Mammary epithelial cell (primary cell): ENCODE measurements at regions of chr11 and their contacts with region 1.

Region 1: GRCh38 chr11:18775492-18776292 is 15.9 kb downstream of the PTPN5 start:
- DNase-seq: peak; percentile 31
- H3K4me3 ChIP-seq: no peak overlapping the region
- H3K27ac ChIP-seq: no peak overlapping the region
- H3K4me1 ChIP-seq: no peaks in the 10 kb centered on the region
- H3K27me3 ChIP-seq: no peaks in the 10 kb centered on the region
- CTCF ChIP-seq: peak; percentile 89 to 95

Region 2: GRCh38 chr11:18802381-18803257 is 26.9 kb after region 1 on chr11:
- CTCF ChIA-PET with region 1: interaction called, 3 read pairs
- dilution Hi-C with region 1: no loop called
- in situ Hi-C with region 1: no loop called
- intact Hi-C with region 1: loop called (anchors 1 kb)
- DNase-seq: peak; percentile 40
- H3K4me3 ChIP-seq: no peak overlapping the region
- H3K27ac ChIP-seq: no peak overlapping the region
- H3K4me1 ChIP-seq: peaks cover 6% of the 10 kb centered on the region
- H3K27me3 ChIP-seq: peaks cover 4% of the 10 kb centered on the region
- CTCF ChIP-seq: peak; percentile 57 to 71

Region 3: DNA sequence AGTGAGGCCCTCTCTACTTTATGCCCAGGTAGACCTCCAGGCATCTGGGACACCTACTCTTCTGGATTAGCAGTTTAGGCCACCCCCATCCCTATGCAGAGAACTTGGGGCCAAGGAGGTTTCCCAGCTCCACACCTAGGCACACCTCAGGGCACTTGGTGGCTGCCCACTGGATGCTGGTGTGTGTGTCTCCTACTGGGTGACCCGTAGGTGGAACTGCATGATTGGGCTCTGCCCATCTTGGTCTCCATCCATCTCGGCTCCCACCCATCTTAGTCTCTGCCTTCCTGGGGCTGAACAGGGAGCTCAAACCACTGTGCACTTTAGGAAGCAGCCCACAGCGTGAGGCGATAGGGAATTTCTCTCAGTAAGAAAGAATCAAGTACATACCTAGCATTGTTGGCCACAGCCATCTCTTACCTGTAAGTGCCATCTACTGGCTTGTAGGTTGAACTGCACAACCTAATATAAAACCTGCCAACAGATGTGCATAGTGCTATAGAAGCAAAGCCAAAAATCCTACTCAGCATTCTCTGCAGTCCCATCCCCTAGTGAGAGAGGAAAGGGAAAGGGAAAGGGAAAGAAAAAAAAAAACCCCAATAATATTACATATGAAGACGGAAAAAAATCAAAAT is 77.5 kb after region 1 on chr11:
- CTCF ChIA-PET with region 1: no interaction called
- dilution Hi-C with region 1: no loop called
- in situ Hi-C with region 1: loop called in 1 of 2 experiments (anchors 10 kb)
- intact Hi-C with region 1: loop called (anchors 1 kb)
- DNase-seq: peak; percentile 41
- H3K4me3 ChIP-seq: no peak overlapping the region
- H3K27ac ChIP-seq: no peak overlapping the region
- H3K4me1 ChIP-seq: no peaks in the 10 kb centered on the region
- H3K27me3 ChIP-seq: no peaks in the 10 kb centered on the region
- CTCF ChIP-seq: peak; percentile 73 to 78